T-cell (primary cell): ENCODE measurements at regions of chr19 and their contacts with region 1.

Region 1: DNA sequence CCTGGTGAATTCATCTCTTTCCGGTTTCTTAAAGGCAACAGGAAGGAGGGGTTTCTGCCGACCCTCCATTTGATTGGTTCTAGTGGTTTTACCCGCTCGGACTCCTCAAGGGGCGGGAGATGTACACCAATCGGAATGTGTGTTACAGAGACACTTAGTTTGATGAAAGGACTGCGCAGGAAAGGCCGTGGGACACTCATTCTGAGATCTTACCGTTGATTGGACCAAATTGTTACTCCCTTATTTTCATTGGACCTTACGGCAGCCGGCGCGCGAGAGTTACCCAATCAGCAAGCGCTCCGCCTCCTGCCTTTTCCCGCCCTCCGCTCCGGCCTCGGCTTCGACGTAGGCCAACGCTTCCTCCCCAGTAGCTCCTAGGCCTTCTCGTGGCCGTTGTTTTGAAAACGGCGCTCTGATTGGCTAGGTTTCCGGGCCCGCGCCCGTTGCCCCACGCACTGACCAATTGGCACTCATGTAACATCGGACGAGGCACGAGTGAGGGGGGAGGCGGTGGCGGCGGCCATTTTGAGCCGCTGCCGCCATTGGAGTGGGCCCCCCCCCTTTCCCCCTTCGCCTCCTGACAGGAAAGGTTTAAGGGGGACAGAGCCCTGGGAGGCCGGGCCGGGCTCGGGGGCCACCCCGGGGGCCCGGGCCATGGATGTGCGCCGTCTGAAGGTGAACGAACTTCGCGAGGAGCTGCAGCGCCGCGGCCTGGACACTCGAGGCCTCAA is at the start of gene HNRNPUL1:
- DNase-seq: peak; percentile 96 to 100 (median 99)
- ATAC-seq: peak; percentile 56 to 72 (median 64)
- H3K4me3 ChIP-seq: peak within 1 kb of the TSS; percentile 85 to 93
- H3K4me3 Mint-ChIP-seq: peak within 1 kb of the TSS; percentile 92 to 100 (median 98)
- H3K27ac ChIP-seq: peak within 1 kb of the TSS; percentile 98
- H3K27ac Mint-ChIP-seq: peak within 1 kb of the TSS; percentile 99 to 100
- H3K4me1 ChIP-seq: peaks cover 10 to 48% of the 10 kb centered on the region in 2 experiments
- H3K4me1 Mint-ChIP-seq: peaks cover 46 to 51% (median 46%) of the 10 kb centered on the region in 3 donors
- H3K27me3 ChIP-seq: no peaks in the 10 kb centered on the region
- H3K27me3 Mint-ChIP-seq: no peaks in the 10 kb centered on the region
- total RNA-seq, gene HNRNPUL1: 275 to 350 (median 307) TPM

Region 2: DNA sequence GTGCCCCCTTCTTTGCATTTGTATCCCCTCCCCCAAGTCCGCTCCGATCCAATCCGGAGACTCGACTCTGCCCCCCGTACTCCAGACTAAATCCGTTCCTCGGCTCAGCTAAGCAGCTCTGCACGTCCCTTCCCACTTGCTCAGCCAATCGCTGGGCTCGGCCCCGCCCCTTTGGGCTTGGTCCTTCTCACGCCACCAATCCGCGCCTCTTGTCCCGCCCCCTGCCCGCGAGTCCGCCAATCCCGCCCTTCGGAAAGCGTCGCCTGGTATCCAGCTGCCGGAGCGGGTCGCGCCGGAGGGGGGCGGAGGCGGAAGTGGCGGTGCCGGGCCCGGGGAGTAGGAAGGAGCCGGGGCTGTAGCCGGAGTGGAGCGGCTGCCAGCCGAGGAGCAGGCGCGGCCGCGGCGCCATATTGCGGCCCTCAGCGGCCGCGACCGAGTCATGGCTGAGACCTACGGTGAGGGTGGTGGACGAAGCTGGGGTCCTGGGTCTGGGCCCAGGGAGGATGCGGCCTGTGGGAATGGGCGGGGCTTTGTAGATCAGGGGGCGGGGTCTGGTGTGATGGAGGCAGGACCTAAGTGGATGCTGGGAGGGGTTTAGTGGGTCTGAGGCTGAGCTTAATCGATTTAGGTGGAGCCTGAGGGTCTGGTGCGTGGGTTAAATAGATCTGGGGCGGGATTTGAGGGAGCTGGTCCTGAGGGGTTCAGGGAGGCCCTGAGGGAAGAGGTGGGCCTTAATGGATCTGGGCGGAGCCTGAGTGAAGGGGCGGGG is 485.9 kb before region 1 on chr19 and contains the start of gene RAB4B:
- CTCF ChIA-PET with region 1: no interaction called
- POLR2A ChIA-PET with region 1: interaction called in 1 of 2 experiments, 10 read pairs
- DNase-seq: peak; percentile 99 to 100 (median 100)
- ATAC-seq: peak; percentile 84 to 89 (median 88)
- H3K4me3 ChIP-seq: peak within 1 kb of the TSS; percentile 67 to 96
- H3K4me3 Mint-ChIP-seq: peak within 1 kb of the TSS; percentile 83 to 90 (median 88)
- H3K27ac ChIP-seq: peak within 1 kb of the TSS; percentile 86
- H3K27ac Mint-ChIP-seq: peak within 1 kb of the TSS; percentile 96
- H3K4me1 ChIP-seq: peaks cover 9 to 26% of the 10 kb centered on the region in 2 experiments
- H3K4me1 Mint-ChIP-seq: peaks cover 26 to 40% (median 38%) of the 10 kb centered on the region in 3 donors
- H3K27me3 ChIP-seq: no peaks in the 10 kb centered on the region
- H3K27me3 Mint-ChIP-seq: no peaks in the 10 kb centered on the region
- total RNA-seq, gene RAB4B: 42.4 to 77.9 (median 63.2) TPM

Region 3: GRCh38 chr19:41192574-41193429 is 71.2 kb before region 1 on chr19 and contains the start of gene CYP2S1:
- CTCF ChIA-PET with region 1: no interaction called
- POLR2A ChIA-PET with region 1: no interaction called
- DNase-seq: peak in 7 of 35 experiments; percentile 4 to 33 (median 12)
- ATAC-seq: peak; percentile 43 to 68 (median 62)
- H3K4me3 ChIP-seq: peak within 1 kb of the TSS in 1 of 2 donors; percentile 27
- H3K4me3 Mint-ChIP-seq: peak within 1 kb of the TSS in 2 of 3 donors; percentile 45 to 54
- H3K27ac ChIP-seq: no peak within 1 kb of the TSS
- H3K27ac Mint-ChIP-seq: no peak within 1 kb of the TSS
- H3K4me1 ChIP-seq: peaks cover 0 to 22% of the 10 kb centered on the region in 2 experiments
- H3K4me1 Mint-ChIP-seq: peaks cover 12 to 16% (median 16%) of the 10 kb centered on the region in 3 donors
- H3K27me3 ChIP-seq: peaks cover 0 to 62% of the 10 kb centered on the region in 2 experiments
- H3K27me3 Mint-ChIP-seq: peaks cover 46 to 54% of the 10 kb centered on the region in 2 donors
- total RNA-seq, gene CYP2S1: 0.20 to 1.2 (median 0.51) TPM in 4 of 5 donors, not detected in the other

Region 4: DNA sequence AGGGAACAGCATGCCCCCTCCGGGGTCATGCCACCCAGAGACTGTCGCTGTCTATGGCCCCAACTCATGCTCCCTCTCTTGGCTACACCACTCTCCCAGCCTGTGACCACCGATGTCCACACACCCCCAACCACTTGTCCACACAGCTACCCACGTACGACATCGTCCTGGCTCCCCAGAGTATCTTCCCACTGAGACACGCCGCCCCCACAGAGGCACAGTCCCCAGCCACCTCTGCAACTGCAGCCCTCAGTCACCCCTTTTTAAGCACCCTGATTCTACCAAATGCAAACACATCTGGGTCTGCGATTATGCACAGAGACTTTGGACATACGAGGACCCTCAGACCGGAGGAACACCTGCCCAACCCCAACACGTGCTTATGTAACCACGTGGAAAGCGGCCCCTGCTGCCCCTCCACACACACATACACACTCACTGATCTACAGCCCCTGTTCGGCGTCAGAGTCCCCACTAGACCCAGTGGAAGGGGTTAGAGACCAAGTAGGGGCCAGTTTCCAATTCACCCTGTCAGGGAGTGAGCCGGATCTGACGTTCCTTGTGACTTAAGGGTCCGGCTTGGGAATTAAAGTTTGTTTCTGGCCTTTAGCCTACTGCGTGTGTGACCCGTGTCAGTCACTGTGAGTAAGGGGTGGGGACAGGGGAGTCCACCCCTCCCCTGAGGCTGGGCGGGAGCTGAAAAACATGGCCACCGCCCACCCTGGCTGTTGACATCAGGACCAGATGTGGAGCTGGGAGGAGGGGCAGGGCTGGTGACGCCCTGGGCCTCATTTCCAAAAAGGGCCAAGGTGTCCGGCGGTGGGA is 56.9 kb before region 1 on chr19:
- CTCF ChIA-PET with region 1: interaction called in 1 of 2 experiments, 52 read pairs
- POLR2A ChIA-PET with region 1: no interaction called
- DNase-seq: no peak
- ATAC-seq: no peak
- H3K4me3 ChIP-seq: no peak overlapping the region
- H3K4me3 Mint-ChIP-seq: no peak overlapping the region
- H3K27ac ChIP-seq: no peak overlapping the region
- H3K27ac Mint-ChIP-seq: no peak overlapping the region
- H3K4me1 ChIP-seq: no peaks in the 10 kb centered on the region
- H3K4me1 Mint-ChIP-seq: peaks cover 1 to 27% (median 11%) of the 10 kb centered on the region in 3 donors
- H3K27me3 ChIP-seq: peaks cover 0 to 14% of the 10 kb centered on the region in 2 experiments
- H3K27me3 Mint-ChIP-seq: peaks cover 0 to 2% of the 10 kb centered on the region in 2 donors

Region 5: GRCh38 chr19:41238244-41238643 is 25.8 kb before region 1 on chr19:
- CTCF ChIA-PET with region 1: no interaction called
- POLR2A ChIA-PET with region 1: no interaction called
- DNase-seq: no peak
- ATAC-seq: no peak
- H3K4me3 ChIP-seq: no peak overlapping the region
- H3K4me3 Mint-ChIP-seq: no peak overlapping the region
- H3K27ac ChIP-seq: no peak overlapping the region
- H3K27ac Mint-ChIP-seq: no peak overlapping the region
- H3K4me1 ChIP-seq: no peaks in the 10 kb centered on the region
- H3K4me1 Mint-ChIP-seq: no peaks in the 10 kb centered on the region
- H3K27me3 ChIP-seq: peaks cover 0 to 14% of the 10 kb centered on the region in 2 experiments
- H3K27me3 Mint-ChIP-seq: no peaks in the 10 kb centered on the region

Region 6: DNA sequence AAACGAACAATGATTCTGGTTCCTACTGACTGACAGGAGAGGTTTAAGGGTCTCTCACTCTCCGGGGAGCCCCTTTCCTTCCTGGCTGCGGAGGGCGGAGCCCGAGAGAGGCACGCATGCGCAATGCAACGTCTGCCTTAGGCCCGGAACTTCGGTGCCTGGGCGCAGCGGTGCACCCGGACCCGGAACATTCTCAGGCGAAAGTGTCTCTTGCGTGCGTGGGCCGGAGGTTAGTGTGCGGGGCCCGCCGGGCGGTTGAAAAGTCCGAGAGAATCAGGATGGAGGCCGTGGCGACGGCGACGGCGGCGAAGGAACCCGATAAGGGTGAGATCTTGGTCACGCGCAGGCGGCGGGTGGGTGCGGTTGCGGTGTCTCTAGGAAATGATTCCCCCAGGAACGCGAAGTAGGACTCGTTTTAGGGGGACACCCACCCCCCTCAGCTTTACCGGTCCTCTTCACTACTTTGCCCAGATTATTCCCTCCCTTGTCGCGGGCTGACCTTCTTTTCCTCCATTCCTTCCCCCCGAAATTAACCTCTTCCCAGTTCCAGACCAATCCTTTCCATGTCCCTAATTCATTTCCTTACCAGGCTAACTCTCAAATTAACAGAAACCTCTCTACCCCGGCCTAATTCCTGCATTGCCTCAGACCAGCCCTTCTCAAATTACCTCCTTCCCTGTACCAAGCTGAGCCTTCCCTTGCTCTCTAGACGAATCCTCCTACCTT is 46.2 kb after region 1 on chr19 and contains the start of gene CCDC97:
- CTCF ChIA-PET with region 1: interaction called in 1 of 2 experiments, 21 read pairs
- POLR2A ChIA-PET with region 1: interaction called, 14 to 23 read pairs
- DNase-seq: peak; percentile 73 to 94 (median 85)
- ATAC-seq: peak; percentile 66 to 72 (median 70)
- H3K4me3 ChIP-seq: peak within 1 kb of the TSS; percentile 96 to 99
- H3K4me3 Mint-ChIP-seq: peak within 1 kb of the TSS; percentile 90 to 98 (median 95)
- H3K27ac ChIP-seq: peak within 1 kb of the TSS; percentile 97
- H3K27ac Mint-ChIP-seq: peak within 1 kb of the TSS; percentile 96 to 99
- H3K4me1 ChIP-seq: peaks cover 45 to 75% of the 10 kb centered on the region in 2 experiments
- H3K4me1 Mint-ChIP-seq: peaks cover 79 to 86% (median 83%) of the 10 kb centered on the region in 3 donors
- H3K27me3 ChIP-seq: no peaks in the 10 kb centered on the region
- H3K27me3 Mint-ChIP-seq: no peaks in the 10 kb centered on the region
- total RNA-seq, gene CCDC97: 38.9 to 61.5 (median 55.1) TPM

Region 7: DNA sequence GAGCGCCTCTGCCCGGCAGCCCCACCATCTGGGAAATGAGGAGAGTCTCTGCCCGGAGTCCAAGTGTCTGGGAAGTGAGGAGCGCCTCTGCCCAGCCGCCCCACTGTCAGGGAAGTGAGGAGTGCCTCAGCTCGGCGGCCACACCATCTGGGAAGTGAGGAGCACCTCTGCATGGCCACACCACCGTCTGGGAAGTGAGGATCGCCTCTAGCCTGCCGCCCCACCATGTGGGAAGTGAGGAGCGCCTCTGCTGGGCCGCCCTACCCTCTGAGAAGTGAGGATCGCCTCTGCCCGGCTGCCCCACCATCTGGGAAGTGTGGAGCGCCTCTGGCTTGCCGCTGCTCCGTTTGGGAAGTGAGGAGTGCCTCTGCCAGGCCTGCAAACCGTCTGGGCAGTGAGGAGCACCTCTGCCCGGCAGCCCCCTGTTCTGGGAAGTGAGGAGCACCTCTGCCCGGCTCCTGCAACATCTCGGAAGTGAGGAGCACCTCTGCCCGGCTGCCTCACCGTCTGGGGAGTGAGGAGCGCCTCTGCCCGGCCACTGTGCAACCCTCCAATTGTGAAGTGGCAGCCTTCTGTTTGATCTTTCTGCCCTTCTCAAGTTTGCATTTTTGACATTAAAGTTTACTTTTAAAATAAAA is 251.1 kb after region 1 on chr19:
- CTCF ChIA-PET with region 1: no interaction called
- POLR2A ChIA-PET with region 1: interaction called in 1 of 2 experiments, 12 read pairs
- DNase-seq: no peak
- ATAC-seq: no peak
- H3K4me3 ChIP-seq: no peak overlapping the region
- H3K4me3 Mint-ChIP-seq: no peak overlapping the region
- H3K27ac ChIP-seq: no peak overlapping the region
- H3K27ac Mint-ChIP-seq: no peak overlapping the region
- H3K4me1 ChIP-seq: no peaks in the 10 kb centered on the region
- H3K4me1 Mint-ChIP-seq: peaks cover 4 to 13% (median 9%) of the 10 kb centered on the region in 3 donors
- H3K27me3 ChIP-seq: peaks cover 2 to 9% of the 10 kb centered on the region in 2 experiments
- H3K27me3 Mint-ChIP-seq: peaks cover 59 to 70% of the 10 kb centered on the region in 2 donors

Region 8: DNA sequence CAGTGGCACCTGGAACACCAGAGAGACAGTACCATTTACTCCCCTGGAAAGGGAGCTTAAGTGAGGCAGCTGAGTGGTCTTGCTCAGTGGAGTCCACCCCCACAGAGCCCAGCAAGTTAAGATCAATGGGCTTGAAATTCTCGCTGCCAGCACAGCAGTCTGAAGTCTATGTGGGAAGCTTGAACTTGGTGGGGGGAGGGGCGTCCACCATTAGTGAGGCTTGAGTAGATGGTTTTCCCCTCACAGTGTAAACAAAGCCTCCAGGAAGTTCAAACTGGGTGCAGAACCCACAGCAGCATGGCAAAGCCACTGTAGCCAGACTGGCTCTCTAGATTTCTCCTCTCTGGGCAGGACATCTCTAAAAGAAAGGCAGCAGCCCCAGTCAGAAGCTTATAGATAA is 393.1 kb after region 1 on chr19:
- CTCF ChIA-PET with region 1: no interaction called
- POLR2A ChIA-PET with region 1: no interaction called
- DNase-seq: peak in 16 of 35 experiments; percentile 9 to 52 (median 14)
- ATAC-seq: peak in 3 of 4 experiments; percentile 29 to 61 (median 38)
- H3K4me3 ChIP-seq: no peak overlapping the region
- H3K4me3 Mint-ChIP-seq: peak overlapping the region in 1 of 3 donors; percentile 22
- H3K27ac ChIP-seq: peak overlapping the region; percentile 81
- H3K27ac Mint-ChIP-seq: peak overlapping the region in 1 of 2 donors; percentile 73
- H3K4me1 ChIP-seq: peaks cover 2 to 12% of the 10 kb centered on the region in 2 experiments
- H3K4me1 Mint-ChIP-seq: peaks cover 9 to 21% (median 18%) of the 10 kb centered on the region in 3 donors
- H3K27me3 ChIP-seq: peaks cover 7 to 13% of the 10 kb centered on the region in 2 experiments
- H3K27me3 Mint-ChIP-seq: peaks cover 57 to 60% of the 10 kb centered on the region in 2 donors